Dorsolateral prefrontal cortex (tissue), 120 donors: ENCODE measurements at regions of chr9 and their contacts with region 1.

Region 1: GRCh38 chr9:36023260-36024048 is 13.3 kb upstream of the RECK start:
- DNase-seq: peak; percentile 29 to 75 (median 64)
- H3K4me3 ChIP-seq: no peak overlapping the region
- H3K27ac ChIP-seq: no peak overlapping the region
- H3K27me3 ChIP-seq: no peaks in the 10 kb centered on the region
- CTCF ChIP-seq: peak; percentile 54 to 85 (median 74)

Region 2: GRCh38 chr9:35603987-35604577 is 419.4 kb before region 1 on chr9:
- intact Hi-C with region 1: no loop called
- DNase-seq: peak; percentile 98 to 99 (median 99)
- H3K4me3 ChIP-seq: peak overlapping the region; percentile 49 to 97 (median 79)
- H3K27ac ChIP-seq: peak overlapping the region; percentile 63 to 95 (median 88)
- H3K27me3 ChIP-seq: no peaks in the 10 kb centered on the region
- CTCF ChIP-seq: peak; percentile 93 to 100 (median 98)

Region 3: GRCh38 chr9:35616681-35617459 is 406.6 kb before region 1 on chr9:
- intact Hi-C with region 1: no loop called
- DNase-seq: peak in 4 of 10 donors; percentile 26 to 63 (median 48)
- H3K4me3 ChIP-seq: peak overlapping the region; percentile 21 to 69 (median 45)
- H3K27ac ChIP-seq: no peak overlapping the region
- H3K27me3 ChIP-seq: peaks cover 0 to 28% (median 0%) of the 10 kb centered on the region in 45 donors
- CTCF ChIP-seq: no peak

Region 4: DNA sequence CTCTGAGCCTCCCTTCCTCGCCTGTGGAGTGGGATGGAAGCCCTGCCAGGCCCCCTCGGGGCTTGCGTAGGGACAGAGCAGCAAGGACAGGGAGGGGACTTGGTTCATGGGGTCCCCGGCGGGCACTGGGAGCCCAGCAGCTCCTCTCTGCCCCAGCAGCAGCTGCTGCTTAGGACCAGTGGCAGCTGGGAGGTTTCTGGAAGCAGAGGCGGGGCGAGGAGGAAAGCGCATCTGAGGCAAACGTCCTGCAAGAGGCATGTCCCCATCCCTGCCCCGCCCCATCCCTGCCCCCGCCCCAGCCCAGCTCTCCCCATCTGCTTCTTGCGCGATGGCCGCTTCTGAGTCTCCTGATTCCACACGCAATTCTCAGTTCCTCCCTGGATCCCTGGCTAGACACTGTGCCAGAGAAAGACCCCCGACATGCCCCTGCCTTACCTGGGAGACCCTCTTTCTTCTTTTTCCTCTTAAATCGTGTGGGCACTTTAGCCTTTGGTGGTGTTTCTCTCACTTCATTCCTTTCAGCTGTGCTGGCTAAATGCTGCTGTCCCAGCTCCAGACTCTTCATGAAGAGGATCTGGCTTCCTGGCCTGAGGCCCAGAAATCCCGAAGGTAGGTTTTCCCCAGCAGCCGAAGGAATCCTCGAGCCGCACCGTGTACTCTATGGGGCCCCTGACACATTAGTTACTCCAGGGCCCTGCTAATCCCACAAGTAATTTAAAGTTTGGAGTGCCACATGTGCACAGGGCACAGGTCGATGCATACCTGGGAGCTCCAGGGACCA is 61.1 kb before region 1 on chr9:
- intact Hi-C with region 1: loop called in 1 of 2 experiments (anchors 10 kb)
- DNase-seq: peak in 3 of 10 donors; percentile 54 to 62 (median 55)
- H3K4me3 ChIP-seq: peak overlapping the region in 34 of 59 donors; percentile 5 to 56 (median 32)
- H3K27ac ChIP-seq: peak overlapping the region in 1 of 59 donors; percentile 20
- H3K27me3 ChIP-seq: no peaks in the 10 kb centered on the region
- CTCF ChIP-seq: no peak

Region 5: DNA sequence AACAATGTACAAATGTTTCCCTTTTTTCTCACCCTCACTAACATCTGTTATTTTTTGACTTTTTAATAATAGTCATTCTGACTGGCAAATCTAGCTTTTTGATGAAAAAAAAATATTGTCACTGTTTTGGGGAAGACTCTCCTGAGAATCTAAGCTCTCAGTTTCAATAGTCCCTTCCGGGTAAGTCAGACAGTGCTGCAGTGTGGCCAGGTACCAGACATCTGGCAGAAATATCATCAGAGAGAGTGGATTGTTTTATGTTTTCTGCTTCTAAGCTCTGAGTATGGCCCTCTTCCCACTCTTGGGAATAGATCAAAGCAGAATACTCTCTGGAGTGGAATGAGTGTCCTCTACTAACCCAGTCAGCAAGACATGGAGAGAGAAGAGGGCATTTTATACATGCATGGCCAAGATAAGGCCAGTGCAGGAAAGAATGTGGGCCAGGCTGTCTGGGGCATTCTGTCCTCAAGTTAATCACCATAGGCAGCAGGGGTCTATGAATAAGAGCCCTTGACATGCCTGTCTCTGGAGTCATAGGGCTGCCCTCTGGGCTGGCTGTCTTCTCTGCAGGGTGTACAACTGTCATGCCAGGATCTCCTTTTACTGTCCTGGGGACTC is 27.0 kb before region 1 on chr9:
- intact Hi-C with region 1: no loop called
- DNase-seq: no peak
- H3K4me3 ChIP-seq: no peak overlapping the region
- H3K27ac ChIP-seq: no peak overlapping the region
- H3K27me3 ChIP-seq: peaks cover 0 to 17% (median 0%) of the 10 kb centered on the region in 45 donors
- CTCF ChIP-seq: no peak